ENCODE measurements at regions of chr12 and their contacts with region 1.

Region 1: GRCh38 chr12:42482445-42483237 is 106.9 kb downstream of the PRICKLE1 start:
- DNase-seq: peak; percentile 76 to 86
- ATAC-seq: peak; percentile 87 to 93 (median 88)
- H3K4me3 ChIP-seq: peak overlapping the region; percentile 77 to 95 (median 84)
- H3K27ac ChIP-seq: peak overlapping the region; percentile 86 to 97 (median 93)
- H3K4me1 ChIP-seq: peaks cover 0 to 77% (median 44%) of the 10 kb centered on the region in 9 donors
- H3K27me3 ChIP-seq: peaks cover 0 to 44% (median 0%) of the 10 kb centered on the region in 7 donors
- CTCF ChIP-seq: peak; percentile 86 to 97 (median 94)

Region 2: DNA sequence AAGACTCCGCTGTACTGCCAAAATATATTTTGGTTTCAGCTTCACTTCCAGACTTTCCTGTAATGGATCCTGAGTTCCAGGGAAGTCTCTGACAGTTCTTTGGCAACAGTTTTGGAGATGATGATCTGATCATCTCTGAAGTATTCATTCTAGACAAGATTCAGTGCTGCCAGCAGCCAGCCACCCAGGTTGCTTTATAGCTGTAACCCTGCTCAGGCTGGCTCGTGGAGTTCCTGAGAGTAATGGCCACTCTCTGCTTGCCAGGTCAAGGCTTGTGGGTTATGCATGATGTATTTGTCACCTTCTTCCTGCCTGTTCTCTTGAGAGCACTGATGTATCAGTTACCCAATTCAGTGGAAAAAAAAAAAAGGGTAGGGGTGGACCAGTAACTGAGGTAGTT is 32.4 kb before region 1 on chr12:
- intact Hi-C with region 1: no loop called
- DNase-seq: no peak
- ATAC-seq: peak in 1 of 8 donors; percentile 41
- H3K4me3 ChIP-seq: no peak overlapping the region
- H3K27ac ChIP-seq: no peak overlapping the region
- H3K4me1 ChIP-seq: peaks cover 0 to 12% (median 4%) of the 10 kb centered on the region in 9 donors
- H3K27me3 ChIP-seq: no peaks in the 10 kb centered on the region
- CTCF ChIP-seq: no peak

Region 3: DNA sequence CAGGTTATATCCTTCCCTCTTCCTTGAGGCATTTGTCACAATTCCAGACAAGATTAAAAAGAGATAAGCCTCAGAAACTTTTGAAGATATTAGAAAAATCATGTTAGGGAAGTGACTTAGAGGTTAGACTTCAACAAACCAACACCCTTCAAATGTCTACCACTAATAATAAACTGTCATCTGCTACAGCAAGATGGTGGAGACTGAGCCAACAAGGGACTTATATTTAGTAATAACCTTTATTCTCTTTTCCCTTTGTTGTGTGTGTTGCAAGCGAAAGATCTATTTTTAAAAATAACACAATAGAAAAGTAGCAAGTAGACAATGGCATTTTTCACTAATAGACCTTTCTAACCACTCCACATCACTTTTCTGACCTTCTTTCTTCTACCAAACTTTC is 78.3 kb after region 1 on chr12:
- intact Hi-C with region 1: loop called in 6 of 10 experiments (anchors 1 to 5 kb)
- DNase-seq: no peak
- ATAC-seq: peak; percentile 46 to 85 (median 74)
- H3K4me3 ChIP-seq: peak overlapping the region in 1 of 10 donors; percentile 12
- H3K27ac ChIP-seq: peak overlapping the region in 6 of 10 donors; percentile 47 to 71 (median 69)
- H3K4me1 ChIP-seq: peaks cover 0 to 71% (median 31%) of the 10 kb centered on the region in 9 donors
- H3K27me3 ChIP-seq: no peaks in the 10 kb centered on the region
- CTCF ChIP-seq: no peak

Region 4: GRCh38 chr12:43282106-43282505 is 799.5 kb after region 1 on chr12:
- intact Hi-C with region 1: loop called in 5 of 10 experiments (anchors 2 to 5 kb)
- DNase-seq: no peak
- ATAC-seq: peak in 2 of 8 donors; percentile 44 to 61
- H3K4me3 ChIP-seq: no peak overlapping the region
- H3K27ac ChIP-seq: no peak overlapping the region
- H3K4me1 ChIP-seq: peaks cover 0 to 24% (median 4%) of the 10 kb centered on the region in 9 donors
- H3K27me3 ChIP-seq: no peaks in the 10 kb centered on the region
- CTCF ChIP-seq: peak in 7 of 9 donors; percentile 16 to 67 (median 61)

Region 5: GRCh38 chr12:43338848-43339526 is 856.3 kb after region 1 on chr12:
- intact Hi-C with region 1: loop called in 7 of 10 experiments (anchors 2 to 10 kb)
- DNase-seq: peak in 1 of 2 donors; percentile 31
- ATAC-seq: peak; percentile 93 to 100 (median 96)
- H3K4me3 ChIP-seq: no peak overlapping the region
- H3K27ac ChIP-seq: peak overlapping the region in 6 of 10 donors; percentile 28 to 71 (median 48)
- H3K4me1 ChIP-seq: peaks cover 0 to 19% (median 16%) of the 10 kb centered on the region in 9 donors
- H3K27me3 ChIP-seq: no peaks in the 10 kb centered on the region
- CTCF ChIP-seq: peak; percentile 22 to 87 (median 70)